ENCODE measurements at regions of chr10 and their contacts with region 1.

Region 1: GRCh38 chr10:14604181-14605142 is 170.2 kb downstream of the FAM107B start:
- DNase-seq: peak; percentile 84
- H3K4me3 ChIP-seq: peak overlapping the region; percentile 69
- H3K27ac ChIP-seq: peak overlapping the region; percentile 57
- H3K4me1 ChIP-seq: peaks cover 25% of the 10 kb centered on the region
- H3K27me3 ChIP-seq: no peaks in the 10 kb centered on the region
- CTCF ChIP-seq: no peak

Region 2: DNA sequence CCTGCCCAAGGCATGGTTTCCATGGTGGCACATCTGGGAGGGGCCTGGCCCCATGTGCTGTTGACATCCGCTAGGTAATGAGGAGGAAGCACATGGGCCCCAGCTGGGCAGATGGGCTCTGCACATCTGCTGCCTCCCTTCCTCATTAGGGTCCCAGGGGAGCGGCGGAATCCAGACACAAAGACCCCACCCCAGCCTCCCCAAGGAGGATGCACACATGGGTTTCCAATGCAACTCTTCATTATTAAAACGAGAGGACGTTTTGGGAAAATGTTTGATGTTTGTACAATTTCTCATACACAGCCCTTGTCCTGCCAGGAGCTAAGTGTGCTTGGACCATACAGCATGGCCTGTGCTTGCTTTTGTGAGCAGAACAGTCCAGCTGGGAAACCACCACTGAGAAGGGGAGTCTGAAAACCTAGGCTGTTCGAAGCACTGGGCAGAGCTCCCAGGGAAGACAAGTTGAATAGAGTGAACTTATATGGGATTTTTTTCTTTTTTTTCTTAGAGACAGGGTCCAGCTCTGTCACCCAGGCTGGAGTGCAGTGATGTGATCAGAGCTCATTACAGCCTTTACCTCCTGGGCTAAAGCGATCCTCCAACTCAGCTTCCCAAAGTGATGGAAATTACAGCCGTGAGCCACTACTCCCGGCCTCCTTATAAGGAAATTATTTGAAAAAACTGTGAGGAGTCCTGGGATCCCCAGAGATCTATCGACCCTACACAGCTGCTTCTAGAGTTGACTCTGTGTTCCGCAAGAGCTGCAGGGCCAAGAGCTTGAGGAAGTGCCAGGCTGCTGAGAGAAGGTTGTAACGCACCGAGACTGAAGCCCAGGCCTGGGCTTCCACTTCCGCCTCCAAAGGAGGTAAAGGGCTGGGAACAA is 146.8 kb after region 1 on chr10:
- intact Hi-C with region 1: loop called (anchors 10 kb)
- DNase-seq: peak; percentile 57
- H3K4me3 ChIP-seq: no peak overlapping the region
- H3K27ac ChIP-seq: peak overlapping the region; percentile 85
- H3K4me1 ChIP-seq: peaks cover 39% of the 10 kb centered on the region
- H3K27me3 ChIP-seq: no peaks in the 10 kb centered on the region
- CTCF ChIP-seq: no peak